ENCODE measurements at regions of chr2 and their contacts with region 1.

Region 1: DNA sequence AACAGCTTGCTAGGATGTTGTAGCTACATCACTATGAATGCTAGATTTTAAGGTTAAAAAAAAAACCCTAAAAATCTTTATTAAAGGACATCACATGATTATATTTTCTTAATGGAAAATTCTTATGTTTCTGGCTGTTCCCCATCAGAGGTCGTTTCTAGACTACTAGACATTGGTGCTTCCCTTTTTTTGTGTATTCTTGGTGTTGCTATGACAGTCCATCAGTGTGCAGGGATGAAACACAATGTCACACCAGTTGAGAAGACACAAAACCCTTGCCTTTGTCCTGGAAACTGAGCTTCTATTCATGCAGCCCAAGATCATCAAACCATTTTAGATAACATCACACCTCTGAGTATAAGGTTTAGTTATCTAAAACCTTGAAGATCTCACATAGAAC is 19.9 kb upstream of the TMEM131 start:
- DNase-seq: no peak
- H3K4me3 ChIP-seq: no peak overlapping the region
- H3K27ac ChIP-seq: no peak overlapping the region
- H3K4me1 ChIP-seq: no peaks in the 10 kb centered on the region
- H3K27me3 ChIP-seq: no peaks in the 10 kb centered on the region
- CTCF ChIP-seq: no peak

Region 2: GRCh38 chr2:98212092-98212797 is 196.6 kb after region 1 on chr2:
- CTCF ChIA-PET with region 1: no interaction called
- POLR2A ChIA-PET with region 1: no interaction called
- intact Hi-C with region 1: no loop called
- DNase-seq: no peak
- H3K4me3 ChIP-seq: no peak overlapping the region
- H3K27ac ChIP-seq: no peak overlapping the region
- H3K4me1 ChIP-seq: no peaks in the 10 kb centered on the region
- H3K27me3 ChIP-seq: peaks cover 58% of the 10 kb centered on the region
- CTCF ChIP-seq: no peak

Region 3: DNA sequence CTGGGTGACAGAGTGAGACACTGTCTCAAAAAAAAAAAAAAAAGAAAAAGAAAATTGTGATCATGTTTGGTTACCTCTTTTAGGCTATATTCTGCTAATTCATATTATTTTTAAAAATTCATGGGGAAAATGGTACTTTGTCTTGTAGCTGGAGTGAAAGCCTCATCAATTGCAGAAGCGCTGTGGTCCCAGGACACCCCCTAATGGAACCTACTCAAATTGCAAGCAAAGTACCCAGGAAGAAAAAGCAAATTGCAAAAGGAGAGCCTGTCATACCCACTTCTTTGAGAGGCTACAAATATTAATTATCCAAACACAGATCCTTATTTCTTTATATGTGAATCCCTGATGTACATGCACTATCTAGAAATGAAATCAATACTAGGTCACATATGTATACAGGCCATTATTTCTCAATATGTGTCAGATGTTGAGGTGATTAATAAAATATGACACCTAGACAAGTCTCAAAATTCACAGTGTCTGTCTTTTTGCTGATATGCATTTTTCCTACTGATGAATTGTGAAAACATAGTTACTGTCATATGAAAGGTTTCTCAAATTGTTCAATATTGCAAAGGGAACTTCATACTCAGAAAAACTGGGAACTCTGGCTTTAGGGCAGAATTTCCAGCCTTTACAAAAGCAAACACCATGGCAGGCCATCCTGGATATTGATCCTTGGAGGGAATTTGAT is 907.7 kb after region 1 on chr2:
- CTCF ChIA-PET with region 1: no interaction called
- POLR2A ChIA-PET with region 1: interaction called, 15 read pairs
- intact Hi-C with region 1: no loop called
- DNase-seq: no peak
- H3K4me3 ChIP-seq: no peak overlapping the region
- H3K27ac ChIP-seq: no peak overlapping the region
- H3K4me1 ChIP-seq: no peaks in the 10 kb centered on the region
- H3K27me3 ChIP-seq: no peaks in the 10 kb centered on the region
- CTCF ChIP-seq: peak; percentile 23; the same call in 1 of the 2 replicates